ENCODE measurements at regions of chr11 and their contacts with region 1.

Region 1: GRCh38 chr11:12963792-12964536 is 45.2 kb upstream of the RASSF10 start:
- DNase-seq: peak; percentile 41 to 78
- ATAC-seq: peak; percentile 89

Region 2: GRCh38 chr11:13183094-13183825 is 219.3 kb after region 1 on chr11:
- intact Hi-C with region 1: loop called in 1 of 2 experiments (anchors 10 kb)
- DNase-seq: no peak
- ATAC-seq: peak; percentile 58

Measured in left colon (tissue), 2 donors.